ENCODE measurements at regions of chr3 and their contacts with region 1.

Region 1: GRCh38 chr3:59386165-59386564 is 336.3 kb upstream of the CFAP20DC start:
- DNase-seq: peak; percentile 88
- ATAC-seq: peak; percentile 75
- H3K4me3 ChIP-seq: peak overlapping the region; percentile 17; the same call in 1 of the 2 replicates
- H3K27ac ChIP-seq: peak overlapping the region; percentile 90
- H3K4me1 ChIP-seq: peaks cover 58% of the 10 kb centered on the region
- H3K27me3 ChIP-seq: no peaks in the 10 kb centered on the region
- CTCF ChIP-seq: no peak
- EP300 ChIP-seq: peak; percentile 95 to 100
- POLR2A ChIP-seq: no peak
- RAD21 ChIP-seq: 0 out of 2 replicates have a peak, but pooled peaks have one; percentile 6

Region 2: GRCh38 chr3:59235634-59236012 is 150.5 kb before region 1 on chr3:
- CTCF ChIA-PET with region 1: interaction called, 4 read pairs
- POLR2A ChIA-PET with region 1: no interaction called
- RAD21 ChIA-PET with region 1: interaction called, 18 read pairs
- SMC1A ChIA-PET with region 1: interaction called, 9 read pairs
- in situ Hi-C with region 1: no loop called
- intact Hi-C with region 1: no loop called
- DNase-seq: peak; percentile 46
- ATAC-seq: peak; percentile 94
- H3K4me3 ChIP-seq: no peak overlapping the region
- H3K27ac ChIP-seq: no peak overlapping the region
- H3K4me1 ChIP-seq: peaks cover 3% of the 10 kb centered on the region
- H3K27me3 ChIP-seq: no peaks in the 10 kb centered on the region
- CTCF ChIP-seq: no peak
- EP300 ChIP-seq: peak; percentile 56 to 81; a peak in 3 of 4 replicates
- POLR2A ChIP-seq: no peak
- RAD21 ChIP-seq: no peak

Region 3: DNA sequence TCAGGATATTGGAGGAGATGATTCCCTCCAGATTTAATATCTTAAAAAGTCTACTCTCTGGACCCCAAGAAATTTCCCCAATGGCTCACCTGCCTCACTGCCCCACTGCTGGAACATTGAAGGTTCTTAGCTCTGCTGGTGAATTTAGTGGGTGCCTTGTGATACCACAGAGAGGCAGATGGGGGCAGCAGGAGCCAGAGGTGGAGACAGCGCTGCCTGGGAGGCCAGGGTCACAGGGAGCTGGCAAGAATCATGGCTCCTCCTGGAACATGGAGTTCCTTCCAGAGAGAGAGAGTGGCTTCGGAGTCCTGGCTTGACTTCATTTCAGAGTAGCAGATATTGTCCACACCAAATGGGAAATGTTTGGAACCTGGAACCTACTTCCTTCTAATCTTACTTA is 72.8 kb before region 1 on chr3:
- CTCF ChIA-PET with region 1: interaction called, 8 read pairs
- POLR2A ChIA-PET with region 1: no interaction called
- RAD21 ChIA-PET with region 1: interaction called, 12 read pairs
- SMC1A ChIA-PET with region 1: interaction called, 12 read pairs
- in situ Hi-C with region 1: no loop called
- intact Hi-C with region 1: loop called (anchors 1 kb)
- DNase-seq: no peak
- ATAC-seq: peak; percentile 93
- H3K4me3 ChIP-seq: no peak overlapping the region
- H3K27ac ChIP-seq: no peak overlapping the region
- H3K4me1 ChIP-seq: no peaks in the 10 kb centered on the region
- H3K27me3 ChIP-seq: no peaks in the 10 kb centered on the region
- CTCF ChIP-seq: peak; percentile 63 to 85 (median 76)
- EP300 ChIP-seq: no peak
- POLR2A ChIP-seq: no peak
- RAD21 ChIP-seq: peak; percentile 99

Region 4: DNA sequence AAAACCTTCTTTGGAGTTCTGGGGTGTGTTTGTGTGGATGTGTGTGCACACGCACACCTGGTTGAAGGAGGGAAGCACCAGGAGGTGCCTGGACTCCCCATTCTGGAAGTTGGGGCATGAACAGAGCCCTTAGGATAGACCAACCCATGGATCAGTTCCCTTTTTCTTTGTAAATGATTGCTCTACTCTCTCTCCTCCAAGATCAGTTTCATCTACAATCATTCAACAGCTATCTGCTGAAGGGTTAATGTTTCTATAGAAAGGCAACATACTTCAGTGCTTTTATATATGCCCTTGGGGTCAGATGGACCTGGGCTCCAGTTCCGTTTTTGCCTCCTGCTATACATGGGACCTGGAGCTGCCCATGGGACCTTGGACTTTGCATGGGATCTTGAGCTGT is 15.8 kb after region 1 on chr3:
- CTCF ChIA-PET with region 1: no interaction called
- POLR2A ChIA-PET with region 1: interaction called, 3 read pairs
- RAD21 ChIA-PET with region 1: interaction called, 5 read pairs
- SMC1A ChIA-PET with region 1: interaction called, 13 read pairs
- in situ Hi-C with region 1: no loop called
- intact Hi-C with region 1: no loop called
- DNase-seq: no peak
- ATAC-seq: peak; percentile 37; the same call in 2 of the 3 replicates
- H3K4me3 ChIP-seq: no peak overlapping the region
- H3K27ac ChIP-seq: no peak overlapping the region
- H3K4me1 ChIP-seq: peaks cover 4% of the 10 kb centered on the region
- H3K27me3 ChIP-seq: no peaks in the 10 kb centered on the region
- CTCF ChIP-seq: no peak
- EP300 ChIP-seq: no peak
- POLR2A ChIP-seq: no peak
- RAD21 ChIP-seq: no peak

Region 5: DNA sequence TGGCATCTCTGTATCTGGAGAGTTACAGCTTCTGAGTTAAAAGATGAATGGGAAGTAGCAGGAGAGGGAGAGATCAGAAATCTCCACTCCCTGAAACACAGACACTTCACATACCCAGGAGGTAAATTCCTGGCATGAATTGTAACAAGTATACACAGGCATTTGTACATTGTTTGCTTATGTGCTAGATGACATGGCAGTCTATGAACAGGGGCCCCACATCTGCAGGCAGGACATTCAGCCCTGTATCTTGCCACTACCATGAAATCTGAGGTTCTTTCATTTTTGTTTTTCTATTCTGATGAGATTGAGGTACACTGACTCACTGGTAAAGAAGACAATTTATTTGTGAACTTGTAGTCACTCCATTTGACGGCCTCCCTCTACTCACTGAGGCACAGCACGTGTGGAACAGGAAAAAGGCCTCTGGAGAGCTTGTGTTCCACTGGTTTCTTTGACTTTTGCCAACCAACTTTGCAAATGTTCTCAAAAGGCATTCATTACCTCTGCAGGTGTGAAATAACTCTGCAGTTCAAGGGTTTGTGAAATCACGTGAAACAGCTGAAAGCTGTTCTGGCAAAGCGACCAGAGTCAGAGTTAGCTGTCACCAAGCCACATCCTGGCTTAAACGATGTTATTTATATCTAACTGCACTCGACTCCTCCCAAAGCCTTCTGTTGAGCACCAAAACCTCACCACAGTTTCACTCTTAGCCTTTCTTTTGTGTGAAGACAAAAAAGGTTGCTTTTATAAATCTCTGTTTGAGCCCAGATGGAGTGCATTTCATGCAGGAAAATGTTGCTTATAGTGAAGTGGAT is 65.0 kb after region 1 on chr3:
- CTCF ChIA-PET with region 1: interaction called, 7 read pairs
- POLR2A ChIA-PET with region 1: interaction called, 12 read pairs
- RAD21 ChIA-PET with region 1: interaction called, 40 read pairs
- SMC1A ChIA-PET with region 1: interaction called, 33 read pairs
- in situ Hi-C with region 1: loop called (anchors 5 kb)
- intact Hi-C with region 1: loop called (anchors 2 kb)
- DNase-seq: peak; percentile 97
- ATAC-seq: peak; percentile 93
- H3K4me3 ChIP-seq: peak overlapping the region; percentile 41; the same call in 1 of the 2 replicates
- H3K27ac ChIP-seq: peak overlapping the region; percentile 87
- H3K4me1 ChIP-seq: peaks cover 34% of the 10 kb centered on the region
- H3K27me3 ChIP-seq: no peaks in the 10 kb centered on the region
- CTCF ChIP-seq: no peak
- EP300 ChIP-seq: peak; percentile 85 to 95; a peak in 3 of 4 replicates
- POLR2A ChIP-seq: peak; percentile 40; the same call in 1 of the 2 replicates
- RAD21 ChIP-seq: peak; percentile 16; the same call in 1 of the 2 replicates

Region 6: GRCh38 chr3:59480486-59480995 is 94.4 kb after region 1 on chr3:
- CTCF ChIA-PET with region 1: no interaction called
- POLR2A ChIA-PET with region 1: no interaction called
- RAD21 ChIA-PET with region 1: no interaction called
- SMC1A ChIA-PET with region 1: interaction called, 8 read pairs
- in situ Hi-C with region 1: no loop called
- intact Hi-C with region 1: loop called (anchors 1 kb)
- DNase-seq: peak; percentile 49
- ATAC-seq: peak; percentile 92
- H3K4me3 ChIP-seq: no peak overlapping the region; the same call in 1 of the 2 replicates
- H3K27ac ChIP-seq: peak overlapping the region; percentile 71
- H3K4me1 ChIP-seq: peaks cover 15% of the 10 kb centered on the region
- H3K27me3 ChIP-seq: no peaks in the 10 kb centered on the region
- CTCF ChIP-seq: 0 out of 6 replicates have a peak, but pooled peaks of 1 of the 3 experiments have one; percentile 12
- EP300 ChIP-seq: peak; percentile 39 to 56; a peak in 2 of 4 replicates
- POLR2A ChIP-seq: no peak
- RAD21 ChIP-seq: peak; percentile 48

Region 7: DNA sequence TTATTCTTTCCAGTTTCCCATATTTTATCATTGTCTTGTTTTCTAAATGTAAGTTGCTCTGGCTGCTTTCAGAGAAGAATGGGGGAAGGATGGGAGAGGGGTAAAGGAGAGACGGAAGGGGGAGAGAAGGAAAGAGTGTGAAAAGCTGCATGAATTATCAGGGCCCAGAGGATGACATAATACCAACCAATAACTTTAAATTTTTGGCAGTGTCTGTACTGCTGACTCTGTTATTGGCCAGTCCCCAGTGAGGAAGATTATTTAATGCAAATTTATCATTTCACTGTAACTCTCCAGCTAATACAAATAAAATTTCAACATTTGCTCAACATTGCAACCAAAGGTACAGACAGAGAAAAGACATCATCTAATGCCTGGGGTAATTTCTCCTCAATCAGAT is 215.3 kb after region 1 on chr3:
- CTCF ChIA-PET with region 1: no interaction called
- POLR2A ChIA-PET with region 1: no interaction called
- RAD21 ChIA-PET with region 1: no interaction called
- SMC1A ChIA-PET with region 1: no interaction called
- in situ Hi-C with region 1: no loop called
- intact Hi-C with region 1: no loop called
- DNase-seq: no peak
- ATAC-seq: no peak
- H3K4me3 ChIP-seq: no peak overlapping the region
- H3K27ac ChIP-seq: no peak overlapping the region
- H3K4me1 ChIP-seq: no peaks in the 10 kb centered on the region
- H3K27me3 ChIP-seq: no peaks in the 10 kb centered on the region; a peak in 1 of 4 replicates
- CTCF ChIP-seq: no peak
- EP300 ChIP-seq: no peak
- POLR2A ChIP-seq: no peak
- RAD21 ChIP-seq: no peak

Region 8: GRCh38 chr3:59857589-59858346 is 471.6 kb after region 1 on chr3:
- CTCF ChIA-PET with region 1: no interaction called
- POLR2A ChIA-PET with region 1: no interaction called
- RAD21 ChIA-PET with region 1: no interaction called
- SMC1A ChIA-PET with region 1: interaction called, 3 read pairs
- in situ Hi-C with region 1: no loop called
- intact Hi-C with region 1: loop called (anchors 5 kb)
- DNase-seq: peak; percentile 17
- ATAC-seq: peak; percentile 100
- H3K4me3 ChIP-seq: no peak overlapping the region
- H3K27ac ChIP-seq: no peak overlapping the region
- H3K4me1 ChIP-seq: no peaks in the 10 kb centered on the region
- H3K27me3 ChIP-seq: no peaks in the 10 kb centered on the region; a peak in 1 of 4 replicates
- CTCF ChIP-seq: peak; percentile 89 to 96 (median 95)
- EP300 ChIP-seq: no peak
- POLR2A ChIP-seq: no peak
- RAD21 ChIP-seq: peak; percentile 85

Measured in GM12878 (cell line).